MCF 10A (cell line): ENCODE measurements at regions of chr11 and their contacts with region 1.

Region 1: GRCh38 chr11:67345920-67346799 is 7.2 kb downstream of the POLD4 start:
- DNase-seq: peak; percentile 92
- H3K4me3 Mint-ChIP-seq: peak overlapping the region; percentile 42
- H3K27ac Mint-ChIP-seq: peak overlapping the region; percentile 97
- H3K4me1 Mint-ChIP-seq: peaks cover 37% of the 10 kb centered on the region
- H3K27me3 Mint-ChIP-seq: no peaks in the 10 kb centered on the region
- CTCF ChIP-seq: peak; percentile 57

Region 2: DNA sequence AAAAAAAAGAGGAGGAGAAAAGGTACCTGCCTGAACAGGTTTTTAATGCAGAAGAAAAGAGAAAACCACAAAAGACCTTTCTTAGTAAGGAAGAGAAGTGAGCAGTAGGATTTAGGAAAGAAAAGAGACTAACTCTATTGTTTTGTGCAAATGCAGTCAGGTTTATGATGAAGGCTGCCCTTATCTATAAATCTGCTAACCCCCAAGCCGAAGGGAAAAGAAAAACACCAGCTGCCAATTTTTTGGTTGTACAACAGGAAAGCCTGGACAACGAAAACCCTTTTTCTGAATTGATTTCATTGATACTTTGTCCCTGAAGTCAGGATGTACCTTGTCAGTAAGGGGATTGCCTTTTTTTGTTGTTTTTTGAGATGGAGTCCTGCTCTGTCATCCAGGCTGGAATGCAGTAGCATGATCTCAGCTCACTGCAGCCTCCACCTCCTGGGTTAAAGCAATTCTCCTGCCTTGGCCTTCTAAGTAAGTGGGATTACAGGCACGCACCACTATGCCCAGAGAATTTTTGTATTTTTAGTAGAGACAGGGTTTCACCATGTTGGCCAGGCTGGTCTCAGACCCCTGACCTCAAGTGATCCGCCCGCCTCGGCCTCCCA is 14.0 kb before region 1 on chr11:
- CTCF ChIA-PET with region 1: interaction called, 10 read pairs
- POLR2A ChIA-PET with region 1: interaction called, 11 read pairs
- intact Hi-C with region 1: no loop called
- DNase-seq: no peak
- H3K4me3 Mint-ChIP-seq: no peak overlapping the region
- H3K27ac Mint-ChIP-seq: no peak overlapping the region
- H3K4me1 Mint-ChIP-seq: peaks cover 3% of the 10 kb centered on the region
- H3K27me3 Mint-ChIP-seq: no peaks in the 10 kb centered on the region
- CTCF ChIP-seq: no peak

Region 3: GRCh38 chr11:67373925-67374618 is 27.9 kb after region 1 on chr11:
- CTCF ChIA-PET with region 1: interaction called, 659 read pairs
- POLR2A ChIA-PET with region 1: interaction called, 144 read pairs
- intact Hi-C with region 1: no loop called
- DNase-seq: peak; percentile 96
- H3K4me3 Mint-ChIP-seq: peak overlapping the region; percentile 84
- H3K27ac Mint-ChIP-seq: peak overlapping the region; percentile 73
- H3K4me1 Mint-ChIP-seq: peaks cover 41% of the 10 kb centered on the region
- H3K27me3 Mint-ChIP-seq: no peaks in the 10 kb centered on the region
- CTCF ChIP-seq: peak; percentile 34

Region 4: GRCh38 chr11:67382276-67383136 is 36.3 kb after region 1 on chr11:
- CTCF ChIA-PET with region 1: interaction called, 659 read pairs
- POLR2A ChIA-PET with region 1: interaction called, 144 read pairs
- intact Hi-C with region 1: loop called (anchors 5 kb)
- DNase-seq: peak; percentile 83
- H3K4me3 Mint-ChIP-seq: no peak overlapping the region
- H3K27ac Mint-ChIP-seq: peak overlapping the region; percentile 6
- H3K4me1 Mint-ChIP-seq: peaks cover 41% of the 10 kb centered on the region
- H3K27me3 Mint-ChIP-seq: no peaks in the 10 kb centered on the region
- CTCF ChIP-seq: peak; percentile 97